WTC11 (cell line): ENCODE measurements at regions of chr9 and their contacts with region 1.

Region 1: DNA sequence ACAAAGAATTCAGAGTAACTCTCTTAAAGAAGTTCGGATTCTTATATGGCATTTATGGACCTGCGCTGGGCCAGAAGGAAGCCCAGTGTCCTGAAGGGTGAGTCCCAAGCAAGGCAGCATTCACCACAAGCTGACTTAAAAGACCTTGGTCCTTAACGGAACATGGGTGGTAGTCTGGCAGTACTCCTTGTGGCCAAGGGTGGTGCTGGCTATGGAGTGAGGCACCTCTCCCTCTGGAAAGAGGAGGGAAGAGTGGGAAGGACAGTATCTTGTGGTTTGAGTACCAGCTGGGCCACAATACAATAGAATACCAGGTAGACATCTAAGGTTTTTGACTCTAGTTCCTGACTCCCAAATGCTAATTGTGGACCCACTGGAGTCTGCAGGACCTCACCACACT is 425.7 kb upstream of the CYLC2 start:
- DNase-seq: peak; percentile 15
- ATAC-seq: peak; percentile 85
- H3K4me3 Mint-ChIP-seq: no peak overlapping the region
- H3K27ac Mint-ChIP-seq: no peak overlapping the region
- H3K4me1 Mint-ChIP-seq: no peaks in the 10 kb centered on the region
- H3K27me3 Mint-ChIP-seq: no peaks in the 10 kb centered on the region
- CTCF ChIP-seq: no peak

Region 2: GRCh38 chr9:104514901-104515300 is 1945.5 kb after region 1 on chr9:
- CTCF ChIA-PET with region 1: no interaction called
- POLR2A ChIA-PET with region 1: interaction called, 10 read pairs
- DNase-seq: no peak
- ATAC-seq: no peak
- H3K4me3 Mint-ChIP-seq: no peak overlapping the region
- H3K27ac Mint-ChIP-seq: no peak overlapping the region
- H3K4me1 Mint-ChIP-seq: no peaks in the 10 kb centered on the region
- H3K27me3 Mint-ChIP-seq: no peaks in the 10 kb centered on the region
- CTCF ChIP-seq: no peak